Heart left ventricle (tissue), 16 donors: ENCODE measurements at regions of chr7 and their contacts with region 1.

Region 1: GRCh38 chr7:1020849-1021251 is 23.5 kb upstream of the GPR146 start:
- DNase-seq: no peak
- ATAC-seq: no peak
- H3K4me3 ChIP-seq: no peak overlapping the region
- H3K27ac ChIP-seq: no peak overlapping the region
- H3K4me1 ChIP-seq: peaks cover 0 to 10% (median 0%) of the 10 kb centered on the region in 12 donors
- H3K27me3 ChIP-seq: no peaks in the 10 kb centered on the region
- CTCF ChIP-seq: peak in 5 of 12 donors; percentile 10 to 32 (median 19)
- POLR2A ChIP-seq: no peak

Region 2: DNA sequence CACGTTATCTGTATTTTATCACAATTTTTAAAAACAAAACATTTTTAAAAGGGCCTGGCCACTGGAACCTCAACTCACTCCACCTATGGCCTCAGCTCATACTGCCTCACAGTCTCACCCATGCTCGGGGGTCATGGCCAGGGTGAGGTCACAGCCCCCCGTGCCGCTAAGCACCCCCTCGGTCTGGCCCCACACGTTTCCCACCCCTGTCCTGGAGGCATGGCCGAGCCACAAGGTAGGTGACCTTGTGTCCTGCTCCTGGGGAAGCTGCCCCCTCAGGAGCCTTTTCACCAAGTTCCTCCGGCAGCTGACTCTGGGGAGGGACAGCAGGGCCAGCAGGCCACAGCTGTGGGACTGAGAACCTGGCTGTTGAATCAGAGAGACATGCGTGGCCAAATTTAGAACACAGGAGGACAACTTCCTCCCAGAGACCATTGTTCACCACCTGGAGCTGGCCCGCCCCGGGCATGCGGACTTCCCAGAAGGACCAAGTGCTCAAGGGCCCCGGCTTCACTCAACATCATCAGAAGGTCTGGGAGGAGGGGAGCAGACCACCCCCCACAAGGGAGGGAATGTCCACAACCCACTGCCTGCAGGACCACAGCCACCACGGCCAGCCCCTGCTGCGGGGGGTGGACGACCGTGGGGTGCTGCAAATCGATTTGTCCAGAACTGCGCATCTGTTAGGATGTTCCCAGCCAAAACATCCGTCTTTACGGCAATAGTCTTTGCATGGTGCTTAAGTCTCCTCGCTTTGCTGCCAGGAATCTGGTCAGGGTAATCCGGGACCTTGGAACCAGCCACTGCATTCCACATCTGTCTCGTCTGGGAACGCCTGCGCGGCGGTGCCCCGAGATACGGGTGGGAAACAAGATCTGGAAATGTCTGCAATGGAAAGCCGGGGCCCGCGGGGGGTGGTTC is 452.6 kb before region 1 on chr7:
- intact Hi-C with region 1: no loop called
- DNase-seq: peak in 4 of 5 donors; percentile 59 to 76 (median 71)
- ATAC-seq: peak; percentile 33 to 81 (median 62)
- H3K4me3 ChIP-seq: peak overlapping the region in 5 of 12 donors; percentile 11 to 31 (median 26)
- H3K27ac ChIP-seq: peak overlapping the region in 10 of 12 donors; percentile 23 to 83 (median 50)
- H3K4me1 ChIP-seq: peaks cover 0 to 40% (median 19%) of the 10 kb centered on the region in 12 donors
- H3K27me3 ChIP-seq: no peaks in the 10 kb centered on the region
- CTCF ChIP-seq: no peak
- POLR2A ChIP-seq: no peak

Region 3: GRCh38 chr7:936131-937054 is 84.5 kb before region 1 on chr7:
- intact Hi-C with region 1: no loop called
- DNase-seq: peak in 3 of 5 donors; percentile 17 to 63 (median 18)
- ATAC-seq: no peak
- H3K4me3 ChIP-seq: no peak overlapping the region
- H3K27ac ChIP-seq: no peak overlapping the region
- H3K4me1 ChIP-seq: peaks cover 0 to 16% (median 0%) of the 10 kb centered on the region in 12 donors
- H3K27me3 ChIP-seq: no peaks in the 10 kb centered on the region
- CTCF ChIP-seq: no peak
- POLR2A ChIP-seq: no peak

Region 4: GRCh38 chr7:1004018-1004852 is 16.6 kb before region 1 on chr7:
- intact Hi-C with region 1: no loop called
- DNase-seq: no peak
- ATAC-seq: peak in 3 of 4 donors; percentile 25 to 46 (median 34)
- H3K4me3 ChIP-seq: no peak overlapping the region
- H3K27ac ChIP-seq: no peak overlapping the region
- H3K4me1 ChIP-seq: no peaks in the 10 kb centered on the region
- H3K27me3 ChIP-seq: no peaks in the 10 kb centered on the region
- CTCF ChIP-seq: no peak
- POLR2A ChIP-seq: no peak

Region 5: GRCh38 chr7:1059200-1060091 is 38.6 kb after region 1 on chr7:
- intact Hi-C with region 1: loop called in 3 of 10 experiments (anchors 2 to 5 kb)
- DNase-seq: peak in 1 of 5 donors; percentile 18
- ATAC-seq: peak in 2 of 4 donors; percentile 4 to 8
- H3K4me3 ChIP-seq: no peak overlapping the region
- H3K27ac ChIP-seq: peak overlapping the region in 2 of 12 donors; percentile 45 to 67
- H3K4me1 ChIP-seq: peaks cover 4 to 42% (median 36%) of the 10 kb centered on the region in 12 donors
- H3K27me3 ChIP-seq: peaks cover 0 to 5% (median 0%) of the 10 kb centered on the region in 9 donors
- CTCF ChIP-seq: no peak
- POLR2A ChIP-seq: no peak

Region 6: GRCh38 chr7:1065263-1066260 is 44.7 kb after region 1 on chr7:
- intact Hi-C with region 1: loop called in 3 of 10 experiments (anchors 2 to 5 kb)
- DNase-seq: peak; percentile 84 to 93 (median 86)
- ATAC-seq: peak; percentile 81 to 97 (median 93)
- H3K4me3 ChIP-seq: peak overlapping the region in 10 of 12 donors; percentile 12 to 50 (median 26)
- H3K27ac ChIP-seq: no peak overlapping the region
- H3K4me1 ChIP-seq: peaks cover 2 to 22% (median 18%) of the 10 kb centered on the region in 12 donors
- H3K27me3 ChIP-seq: no peaks in the 10 kb centered on the region
- CTCF ChIP-seq: peak; percentile 89 to 99 (median 96)
- POLR2A ChIP-seq: peak in 1 of 2 donors; percentile 21